ENCODE measurements at regions of chr7 and their contacts with region 1.

Region 1: GRCh38 chr7:50092579-50093491 is at the start of gene ZPBP:
- DNase-seq: peak in 1 of 2 donors; percentile 34
- ATAC-seq: peak; percentile 79
- total RNA-seq, gene ZPBP: not detected

Region 2: DNA sequence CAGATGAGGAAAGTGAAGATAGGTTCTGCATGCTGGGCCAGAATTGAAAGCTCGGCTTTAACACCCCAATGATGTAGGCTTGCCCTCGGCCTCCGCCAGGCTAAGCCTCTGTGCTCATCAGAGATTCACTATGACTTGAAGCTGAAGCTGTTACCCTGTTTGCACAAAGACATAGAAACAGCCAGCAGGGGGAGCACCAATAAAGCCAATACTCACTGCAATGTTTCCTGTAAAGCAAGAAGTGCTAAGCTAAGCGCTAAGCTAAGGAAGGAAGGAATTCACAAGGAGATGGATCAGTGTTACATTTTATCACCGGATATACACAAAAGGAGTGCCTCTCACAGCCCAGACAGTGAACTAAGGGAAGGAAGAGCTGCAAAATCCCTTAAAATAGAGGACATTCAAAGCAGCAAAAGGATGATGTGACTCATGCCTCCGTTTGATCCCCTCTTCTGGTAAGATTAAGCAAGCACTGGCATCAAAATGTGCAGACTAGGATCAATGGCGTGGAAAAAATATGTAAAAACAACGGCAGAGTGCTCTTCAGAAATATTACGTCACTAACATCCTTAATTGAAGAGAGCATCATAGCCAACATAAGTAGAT is 1070.0 kb after region 1 on chr7:
- intact Hi-C with region 1: loop called in 1 of 2 experiments (anchors 10 kb)
- DNase-seq: peak; percentile 63 to 83
- ATAC-seq: peak; percentile 96